ENCODE measurements at regions of chr5 and their contacts with region 1.

Region 1: GRCh38 chr5:146185161-146185560 is 2.7 kb upstream of the LARS1 start:
- DNase-seq: no peak
- ATAC-seq: no peak
- H3K4me3 ChIP-seq: no peak overlapping the region
- H3K27ac ChIP-seq: no peak overlapping the region
- H3K4me1 ChIP-seq: no peaks in the 10 kb centered on the region; the same call in 1 of the 2 replicates
- H3K27me3 ChIP-seq: no peaks in the 10 kb centered on the region
- CTCF ChIP-seq: no peak

Region 2: GRCh38 chr5:146203011-146203871 is 18.1 kb after region 1 on chr5 and contains the start of gene RBM27:
- CTCF ChIA-PET with region 1: interaction called, 3 read pairs
- POLR2A ChIA-PET with region 1: interaction called, 11 read pairs
- in situ Hi-C with region 1: no loop called
- intact Hi-C with region 1: no loop called
- DNase-seq: peak; percentile 98
- ATAC-seq: peak; percentile 100
- H3K4me3 ChIP-seq: peak within 1 kb of the TSS; percentile 65 to 71
- H3K27ac ChIP-seq: peak within 1 kb of the TSS; percentile 98
- H3K4me1 ChIP-seq: peaks cover 6% of the 10 kb centered on the region; the same call in 1 of the 2 replicates
- H3K27me3 ChIP-seq: no peaks in the 10 kb centered on the region
- CTCF ChIP-seq: no peak
- total RNA-seq, gene RBM27: 22.5 TPM

Region 3: GRCh38 chr5:146622391-146622790 is 437.2 kb after region 1 on chr5:
- CTCF ChIA-PET with region 1: no interaction called
- POLR2A ChIA-PET with region 1: interaction called, 10 read pairs
- in situ Hi-C with region 1: no loop called
- intact Hi-C with region 1: no loop called
- DNase-seq: no peak
- ATAC-seq: no peak
- H3K4me3 ChIP-seq: no peak overlapping the region
- H3K27ac ChIP-seq: no peak overlapping the region
- H3K4me1 ChIP-seq: no peaks in the 10 kb centered on the region
- H3K27me3 ChIP-seq: no peaks in the 10 kb centered on the region
- CTCF ChIP-seq: peak; percentile 52

Region 4: DNA sequence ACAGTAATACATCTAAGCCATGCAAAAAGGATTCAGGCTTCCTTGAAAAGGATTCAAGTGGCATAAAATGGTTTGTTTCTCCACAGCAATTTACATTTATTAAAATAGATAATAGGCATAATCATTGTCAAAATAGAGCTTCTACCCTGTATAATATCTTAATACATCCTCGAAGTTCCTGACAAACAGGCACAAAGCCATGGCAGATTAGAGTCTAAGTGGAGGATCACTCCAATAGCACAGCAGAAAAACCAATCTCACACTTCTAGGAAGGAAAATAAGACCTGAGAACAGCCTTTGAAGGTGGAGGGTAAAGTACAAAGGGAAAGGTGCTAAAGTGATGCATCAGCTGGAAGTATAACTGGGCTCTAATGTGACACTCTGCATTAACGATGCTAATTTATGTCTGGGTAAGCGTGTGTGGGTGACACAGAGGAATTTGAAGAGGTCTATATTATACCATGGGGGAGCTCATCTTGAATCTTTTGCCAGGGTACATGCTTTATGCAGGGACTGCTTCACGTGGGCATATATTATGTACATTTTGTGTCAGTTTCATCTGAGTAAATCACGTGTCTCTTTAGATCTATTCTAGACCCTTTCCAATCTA is 664.6 kb after region 1 on chr5:
- CTCF ChIA-PET with region 1: no interaction called
- POLR2A ChIA-PET with region 1: no interaction called
- in situ Hi-C with region 1: no loop called
- intact Hi-C with region 1: no loop called
- DNase-seq: no peak
- ATAC-seq: no peak
- H3K4me3 ChIP-seq: no peak overlapping the region
- H3K27ac ChIP-seq: no peak overlapping the region
- H3K4me1 ChIP-seq: no peaks in the 10 kb centered on the region; the same call in 1 of the 2 replicates
- H3K27me3 ChIP-seq: no peaks in the 10 kb centered on the region; the same call in 1 of the 2 replicates
- CTCF ChIP-seq: no peak

Measured in Panc1 (cell line).